GM23248 (cell line): ENCODE measurements at regions of chr10 and their contacts with region 1.

Region 1: DNA sequence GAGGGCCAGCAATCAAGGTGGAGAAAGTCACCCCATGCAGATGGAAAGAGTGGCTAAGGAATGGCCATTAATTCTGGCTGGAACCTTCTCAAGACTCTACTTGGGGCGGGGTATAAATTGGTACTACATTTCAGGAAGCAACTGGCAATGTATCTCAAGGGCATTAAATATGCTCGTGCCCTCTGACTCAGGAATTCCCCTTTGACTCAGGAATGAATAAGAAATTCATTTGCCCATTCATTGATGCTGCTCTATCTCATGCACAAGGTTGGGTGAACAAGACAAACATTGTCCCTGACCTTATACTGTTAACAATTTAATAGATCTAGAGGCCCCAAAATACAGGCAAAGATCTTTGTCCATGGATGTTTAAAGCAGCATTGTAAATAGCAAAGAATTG is 188.1 kb downstream of the MYOF start:
- DNase-seq: peak; percentile 31
- H3K4me3 ChIP-seq: no peak overlapping the region
- H3K27ac ChIP-seq: no peak overlapping the region
- H3K4me1 ChIP-seq: no peaks in the 10 kb centered on the region
- H3K27me3 ChIP-seq: no peaks in the 10 kb centered on the region

Region 2: DNA sequence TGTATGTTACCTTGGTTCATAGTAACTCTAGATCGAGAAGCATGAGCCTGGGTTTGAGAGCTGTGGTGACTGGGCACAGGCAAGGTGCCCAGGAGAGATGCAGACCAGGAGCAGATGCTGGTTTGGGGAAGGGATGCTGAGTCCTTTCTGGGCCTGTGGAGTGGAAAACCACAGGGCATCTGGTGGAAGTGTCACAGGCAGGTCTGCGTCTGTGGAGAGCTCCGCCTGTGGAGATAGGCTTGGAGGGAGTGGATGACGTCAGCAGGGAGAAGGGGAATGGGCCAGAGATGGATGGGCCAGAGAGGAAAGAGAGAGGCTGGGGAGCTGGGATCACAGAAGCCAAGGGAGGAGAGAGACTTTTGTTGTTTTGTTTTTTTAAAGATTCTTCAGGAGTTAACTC is 205.5 kb before region 1 on chr10:
- in situ Hi-C with region 1: loop called (anchors 5 kb)
- DNase-seq: no peak
- H3K4me3 ChIP-seq: no peak overlapping the region
- H3K27ac ChIP-seq: no peak overlapping the region
- H3K4me1 ChIP-seq: no peaks in the 10 kb centered on the region
- H3K27me3 ChIP-seq: no peaks in the 10 kb centered on the region; the same call in 1 of the 2 replicates

Region 3: GRCh38 chr10:93413252-93413689 is 119.3 kb after region 1 on chr10:
- in situ Hi-C with region 1: no loop called
- DNase-seq: peak; percentile 21
- H3K4me3 ChIP-seq: no peak overlapping the region
- H3K27ac ChIP-seq: no peak overlapping the region
- H3K4me1 ChIP-seq: no peaks in the 10 kb centered on the region
- H3K27me3 ChIP-seq: no peaks in the 10 kb centered on the region

Region 4: GRCh38 chr10:93746844-93747284 is 452.9 kb after region 1 on chr10:
- in situ Hi-C with region 1: no loop called
- DNase-seq: peak; percentile 83
- H3K4me3 ChIP-seq: no peak overlapping the region
- H3K27ac ChIP-seq: peak overlapping the region; percentile 52
- H3K4me1 ChIP-seq: 0 out of 2 replicates have a peak, but pooled peaks cover 3% of the 10 kb centered on the region
- H3K27me3 ChIP-seq: 0 out of 2 replicates have a peak, but pooled peaks cover 4% of the 10 kb centered on the region

Region 5: DNA sequence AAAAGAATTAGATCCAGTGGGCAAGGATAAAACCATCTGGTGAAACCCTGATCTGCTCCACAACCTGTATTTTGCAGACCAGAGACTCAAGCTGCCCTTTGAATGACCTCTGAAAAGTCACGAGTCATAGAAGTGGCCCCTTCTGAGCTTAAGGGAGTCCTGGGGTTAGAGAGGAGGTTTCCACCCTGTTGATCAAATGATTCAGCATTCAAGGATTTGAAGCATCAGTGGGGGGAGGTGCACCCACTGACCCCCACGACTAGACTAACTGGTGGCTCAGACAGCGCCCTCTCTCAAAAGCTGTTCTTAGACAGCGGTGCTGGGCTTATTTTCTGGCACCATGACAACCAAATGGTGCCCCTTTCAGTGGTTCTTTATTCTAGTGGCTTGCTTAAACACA is 744.0 kb after region 1 on chr10:
- in situ Hi-C with region 1: no loop called
- DNase-seq: peak; percentile 44
- H3K4me3 ChIP-seq: no peak overlapping the region
- H3K27ac ChIP-seq: no peak overlapping the region
- H3K4me1 ChIP-seq: peaks cover 34% of the 10 kb centered on the region
- H3K27me3 ChIP-seq: no peaks in the 10 kb centered on the region

Region 6: GRCh38 chr10:94500063-94500462 is 1206.1 kb after region 1 on chr10:
- in situ Hi-C with region 1: no loop called
- DNase-seq: peak; percentile 13
- H3K4me3 ChIP-seq: no peak overlapping the region
- H3K27ac ChIP-seq: no peak overlapping the region
- H3K4me1 ChIP-seq: peaks cover 12% of the 10 kb centered on the region; the same call in 1 of the 2 replicates
- H3K27me3 ChIP-seq: no peaks in the 10 kb centered on the region